Activated CD4-positive, alpha-beta memory T cell treated with anti-CD3 and anti-CD28 coated beads for 36 hours (primary cell): ENCODE measurements at regions of chr20 and their contacts with region 1.

Region 1: GRCh38 chr20:53708129-53708968 is 114.7 kb upstream of the ZNF217 start:
- DNase-seq: peak; percentile 62
- H3K4me3 Mint-ChIP-seq: peak overlapping the region; percentile 63
- H3K27ac Mint-ChIP-seq: peak overlapping the region; percentile 94
- H3K4me1 Mint-ChIP-seq: peaks cover 39% of the 10 kb centered on the region
- H3K27me3 Mint-ChIP-seq: no peaks in the 10 kb centered on the region

Region 2: GRCh38 chr20:53643031-53643832 is 65.1 kb before region 1 on chr20:
- CTCF ChIA-PET with region 1: interaction called, 8 read pairs
- POLR2A ChIA-PET with region 1: interaction called, 6 read pairs
- intact Hi-C with region 1: loop called (anchors 1 kb)
- DNase-seq: peak; percentile 76
- H3K4me3 Mint-ChIP-seq: peak overlapping the region; percentile 68
- H3K27ac Mint-ChIP-seq: peak overlapping the region; percentile 88
- H3K4me1 Mint-ChIP-seq: peaks cover 28% of the 10 kb centered on the region
- H3K27me3 Mint-ChIP-seq: no peaks in the 10 kb centered on the region

Region 3: GRCh38 chr20:53684971-53685797 is 23.2 kb before region 1 on chr20:
- CTCF ChIA-PET with region 1: interaction called, 8 read pairs
- POLR2A ChIA-PET with region 1: interaction called, 11 read pairs
- intact Hi-C with region 1: loop called (anchors 1 kb)
- DNase-seq: no peak
- H3K4me3 Mint-ChIP-seq: no peak overlapping the region
- H3K27ac Mint-ChIP-seq: peak overlapping the region; percentile 82
- H3K4me1 Mint-ChIP-seq: peaks cover 27% of the 10 kb centered on the region
- H3K27me3 Mint-ChIP-seq: no peaks in the 10 kb centered on the region

Region 4: DNA sequence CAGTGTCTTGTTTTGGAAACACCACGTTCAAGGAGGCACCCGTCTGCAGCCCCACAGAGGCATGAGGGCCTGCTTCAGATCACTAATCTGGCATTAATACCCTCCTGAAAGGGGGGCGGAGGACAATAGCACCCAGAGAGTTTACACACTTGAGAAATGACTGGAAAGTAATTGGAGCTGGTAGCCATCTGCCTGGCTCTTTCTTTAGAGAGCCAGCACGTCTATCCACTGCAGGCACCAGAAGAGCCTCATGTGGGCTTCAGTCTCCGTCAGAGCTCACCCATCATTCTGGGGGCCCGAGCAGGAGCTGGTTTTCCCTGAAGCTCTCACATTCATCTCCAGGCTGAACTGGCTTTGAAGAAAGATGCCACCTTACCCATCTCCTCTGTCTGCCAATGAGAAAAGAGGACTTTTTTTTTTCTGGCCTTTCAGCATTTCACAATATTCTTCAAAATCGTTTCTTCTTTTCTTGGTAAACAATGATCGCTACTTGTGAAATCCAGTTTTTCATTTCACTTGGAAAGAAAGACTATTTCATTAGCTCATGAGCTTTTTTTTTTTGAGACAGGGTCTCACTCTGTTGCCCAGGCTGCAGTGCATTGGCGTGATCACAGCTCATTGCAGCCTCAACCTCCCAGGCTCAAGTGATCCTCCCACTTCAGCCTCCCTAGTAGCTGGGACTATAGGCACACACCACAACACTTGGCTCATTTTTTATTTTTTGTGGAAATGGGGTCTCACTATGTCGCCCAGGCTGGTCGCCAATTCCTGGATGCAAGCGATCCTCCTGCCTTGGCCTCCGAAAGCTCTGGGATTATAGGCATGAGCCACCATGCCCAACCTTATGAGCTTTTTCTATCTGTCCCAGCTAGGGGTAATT is 10.0 kb after region 1 on chr20:
- CTCF ChIA-PET with region 1: no interaction called
- POLR2A ChIA-PET with region 1: interaction called, 3 read pairs
- intact Hi-C with region 1: loop called (anchors 1 kb)
- DNase-seq: no peak
- H3K4me3 Mint-ChIP-seq: no peak overlapping the region
- H3K27ac Mint-ChIP-seq: no peak overlapping the region
- H3K4me1 Mint-ChIP-seq: peaks cover 13% of the 10 kb centered on the region
- H3K27me3 Mint-ChIP-seq: no peaks in the 10 kb centered on the region

Region 5: GRCh38 chr20:53739799-53740785 is 31.7 kb after region 1 on chr20:
- CTCF ChIA-PET with region 1: interaction called, 4 read pairs
- POLR2A ChIA-PET with region 1: interaction called, 3 read pairs
- intact Hi-C with region 1: loop called (anchors 1 kb)
- DNase-seq: peak; percentile 24
- H3K4me3 Mint-ChIP-seq: peak overlapping the region; percentile 75
- H3K27ac Mint-ChIP-seq: peak overlapping the region; percentile 74
- H3K4me1 Mint-ChIP-seq: peaks cover 38% of the 10 kb centered on the region
- H3K27me3 Mint-ChIP-seq: no peaks in the 10 kb centered on the region

Region 6: DNA sequence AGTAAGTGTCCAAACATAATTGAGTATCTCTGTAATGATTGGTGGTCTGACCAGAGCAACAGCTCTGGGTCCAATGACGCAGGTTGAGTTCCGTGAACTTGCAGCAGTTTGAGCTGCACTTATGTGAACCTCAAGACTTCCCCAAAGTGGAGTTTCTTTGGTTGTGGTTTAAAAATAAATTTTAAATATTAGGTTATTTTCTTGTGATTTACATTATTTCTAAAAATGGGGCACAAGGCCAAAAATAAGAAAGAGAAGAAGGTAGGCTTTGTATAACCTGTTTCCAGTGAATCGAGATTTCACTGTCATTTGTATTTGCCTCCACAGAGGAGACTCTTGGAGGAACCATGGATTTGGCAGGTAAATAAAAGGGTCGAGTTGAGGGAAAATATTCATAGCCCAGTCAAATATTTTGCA is 51.7 kb after region 1 on chr20:
- CTCF ChIA-PET with region 1: no interaction called
- POLR2A ChIA-PET with region 1: no interaction called
- intact Hi-C with region 1: no loop called
- DNase-seq: no peak
- H3K4me3 Mint-ChIP-seq: no peak overlapping the region
- H3K27ac Mint-ChIP-seq: no peak overlapping the region
- H3K4me1 Mint-ChIP-seq: peaks cover 9% of the 10 kb centered on the region
- H3K27me3 Mint-ChIP-seq: no peaks in the 10 kb centered on the region

Region 7: GRCh38 chr20:53786445-53787267 is 78.3 kb after region 1 on chr20:
- CTCF ChIA-PET with region 1: no interaction called
- POLR2A ChIA-PET with region 1: no interaction called
- intact Hi-C with region 1: no loop called
- DNase-seq: no peak
- H3K4me3 Mint-ChIP-seq: no peak overlapping the region
- H3K27ac Mint-ChIP-seq: no peak overlapping the region
- H3K4me1 Mint-ChIP-seq: peaks cover 11% of the 10 kb centered on the region
- H3K27me3 Mint-ChIP-seq: no peaks in the 10 kb centered on the region

Region 8: GRCh38 chr20:53813636-53814429 is 105.5 kb after region 1 on chr20:
- CTCF ChIA-PET with region 1: no interaction called
- POLR2A ChIA-PET with region 1: no interaction called
- intact Hi-C with region 1: no loop called
- DNase-seq: no peak
- H3K4me3 Mint-ChIP-seq: no peak overlapping the region
- H3K27ac Mint-ChIP-seq: no peak overlapping the region
- H3K4me1 Mint-ChIP-seq: peaks cover 15% of the 10 kb centered on the region
- H3K27me3 Mint-ChIP-seq: no peaks in the 10 kb centered on the region

Region 9: DNA sequence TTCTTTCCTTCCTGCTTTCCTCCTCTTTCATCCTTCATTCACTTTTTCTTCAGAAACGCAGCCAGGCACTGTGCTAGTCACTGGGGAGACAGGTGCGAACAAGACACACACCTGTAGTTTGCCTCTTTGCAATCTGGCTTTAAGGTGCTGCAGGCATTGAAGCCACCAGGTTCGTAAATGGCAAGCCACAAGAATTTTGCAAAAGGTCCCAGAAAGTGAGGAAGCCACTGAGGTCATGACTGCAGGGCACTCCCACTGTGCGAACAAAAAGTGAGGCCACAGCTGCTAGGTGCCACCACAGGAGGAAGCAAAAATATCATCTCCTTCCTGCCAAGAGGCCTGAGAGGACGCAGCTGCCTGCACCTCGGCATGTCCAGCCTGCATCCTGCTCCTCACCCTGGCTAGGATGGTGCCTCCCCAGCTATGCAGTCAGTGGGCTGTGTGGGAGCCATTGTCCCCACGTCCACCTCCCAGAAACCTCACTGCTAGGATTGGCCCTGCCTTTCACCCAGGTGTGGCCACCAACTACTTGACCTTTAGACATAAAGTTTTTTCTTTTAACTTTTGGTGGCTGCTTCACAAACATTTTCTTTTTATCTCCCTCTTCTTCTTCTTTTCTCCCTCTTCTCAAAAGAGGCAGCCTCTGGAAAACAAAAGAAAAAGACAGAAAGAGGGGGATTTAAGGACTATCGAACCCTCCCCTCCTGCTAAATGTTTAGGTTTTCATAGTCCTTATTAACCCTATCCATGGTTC is 131.3 kb after region 1 on chr20:
- CTCF ChIA-PET with region 1: no interaction called
- POLR2A ChIA-PET with region 1: interaction called, 3 read pairs
- intact Hi-C with region 1: loop called (anchors 2 kb)
- DNase-seq: peak; percentile 66
- H3K4me3 Mint-ChIP-seq: peak overlapping the region; percentile 58
- H3K27ac Mint-ChIP-seq: peak overlapping the region; percentile 76
- H3K4me1 Mint-ChIP-seq: peaks cover 64% of the 10 kb centered on the region
- H3K27me3 Mint-ChIP-seq: no peaks in the 10 kb centered on the region

Region 10: DNA sequence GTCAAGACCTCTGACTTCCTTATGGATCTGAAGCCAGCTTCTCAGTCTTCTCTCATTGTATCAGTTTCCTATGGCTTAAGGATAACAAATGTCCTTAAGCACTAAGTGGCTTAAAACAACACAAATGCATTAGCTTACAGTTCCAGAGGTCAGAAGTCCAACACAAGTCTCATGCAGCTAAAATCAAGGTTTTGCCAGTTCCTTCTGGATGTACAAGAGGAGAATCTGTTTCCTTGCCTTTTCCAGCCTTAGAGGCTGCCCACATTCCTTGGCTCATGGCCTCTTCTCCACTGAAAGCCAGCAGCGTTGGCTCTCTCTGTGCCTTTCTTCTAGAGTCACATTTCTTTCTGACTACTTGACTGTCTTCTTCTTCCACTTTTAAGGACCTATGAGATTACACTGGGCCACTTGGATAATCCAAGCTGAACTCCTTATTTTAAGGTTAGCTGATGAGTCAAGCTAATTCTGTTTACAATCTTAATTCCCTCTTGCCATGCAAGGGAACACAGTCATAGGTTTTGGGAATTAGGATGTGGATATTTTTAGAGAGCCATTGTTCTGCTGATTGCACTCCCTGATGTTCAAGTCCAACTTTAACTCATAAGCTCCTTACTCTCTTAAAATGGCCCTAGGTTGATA is 183.1 kb after region 1 on chr20:
- CTCF ChIA-PET with region 1: no interaction called
- POLR2A ChIA-PET with region 1: no interaction called
- intact Hi-C with region 1: loop called (anchors 1 kb)
- DNase-seq: no peak
- H3K4me3 Mint-ChIP-seq: no peak overlapping the region
- H3K27ac Mint-ChIP-seq: no peak overlapping the region
- H3K4me1 Mint-ChIP-seq: peaks cover 30% of the 10 kb centered on the region
- H3K27me3 Mint-ChIP-seq: no peaks in the 10 kb centered on the region

Region 11: DNA sequence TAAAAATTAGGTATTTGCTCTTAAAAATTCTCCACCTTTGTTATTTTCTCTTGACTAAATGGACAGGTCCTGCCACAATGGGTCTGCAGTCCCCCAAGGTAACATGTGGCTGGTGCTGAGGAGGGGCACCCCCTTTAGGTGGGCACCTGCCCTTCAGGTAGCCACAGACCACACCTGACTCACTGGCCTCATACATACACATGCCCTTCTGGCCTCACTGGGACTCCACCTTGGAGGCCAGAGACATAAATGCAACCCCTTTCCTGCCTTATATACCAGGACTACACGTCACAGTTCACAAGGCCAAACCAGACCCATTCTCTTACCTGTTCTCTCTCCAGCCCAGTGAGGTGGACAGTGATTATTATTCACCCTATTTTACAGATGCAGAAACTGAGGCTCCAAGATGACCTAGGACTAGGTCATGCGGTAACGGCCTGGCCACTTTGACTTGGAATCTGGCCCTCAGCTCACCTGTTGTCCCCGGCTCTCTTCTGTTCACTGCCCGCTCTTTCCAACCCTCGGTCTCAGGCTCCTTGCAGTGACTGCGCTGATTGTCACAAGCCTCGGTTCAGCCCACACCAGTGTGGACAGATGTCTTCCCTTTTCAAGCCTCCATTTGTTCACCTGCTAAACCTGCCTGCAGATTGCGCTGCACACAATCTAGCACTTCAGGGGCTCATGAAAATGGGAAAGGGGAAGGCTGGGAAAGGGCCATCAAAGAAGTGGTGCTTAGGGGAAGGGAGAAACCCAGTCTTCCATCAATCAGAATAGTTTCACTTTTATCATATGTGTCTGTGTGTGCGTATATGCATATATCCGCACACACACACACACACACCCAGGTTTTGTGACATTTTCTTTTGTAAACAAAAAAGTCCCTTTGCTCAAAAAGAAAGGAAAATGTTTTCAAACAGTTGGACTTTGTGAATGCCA is 240.3 kb after region 1 on chr20:
- CTCF ChIA-PET with region 1: no interaction called
- POLR2A ChIA-PET with region 1: no interaction called
- intact Hi-C with region 1: no loop called
- DNase-seq: peak; percentile 30
- H3K4me3 Mint-ChIP-seq: peak overlapping the region; percentile 66
- H3K27ac Mint-ChIP-seq: peak overlapping the region; percentile 87
- H3K4me1 Mint-ChIP-seq: peaks cover 33% of the 10 kb centered on the region
- H3K27me3 Mint-ChIP-seq: no peaks in the 10 kb centered on the region